Prostate gland (tissue), 2 donors: ENCODE measurements at regions of chr15 and their contacts with region 1.

Region 1: DNA sequence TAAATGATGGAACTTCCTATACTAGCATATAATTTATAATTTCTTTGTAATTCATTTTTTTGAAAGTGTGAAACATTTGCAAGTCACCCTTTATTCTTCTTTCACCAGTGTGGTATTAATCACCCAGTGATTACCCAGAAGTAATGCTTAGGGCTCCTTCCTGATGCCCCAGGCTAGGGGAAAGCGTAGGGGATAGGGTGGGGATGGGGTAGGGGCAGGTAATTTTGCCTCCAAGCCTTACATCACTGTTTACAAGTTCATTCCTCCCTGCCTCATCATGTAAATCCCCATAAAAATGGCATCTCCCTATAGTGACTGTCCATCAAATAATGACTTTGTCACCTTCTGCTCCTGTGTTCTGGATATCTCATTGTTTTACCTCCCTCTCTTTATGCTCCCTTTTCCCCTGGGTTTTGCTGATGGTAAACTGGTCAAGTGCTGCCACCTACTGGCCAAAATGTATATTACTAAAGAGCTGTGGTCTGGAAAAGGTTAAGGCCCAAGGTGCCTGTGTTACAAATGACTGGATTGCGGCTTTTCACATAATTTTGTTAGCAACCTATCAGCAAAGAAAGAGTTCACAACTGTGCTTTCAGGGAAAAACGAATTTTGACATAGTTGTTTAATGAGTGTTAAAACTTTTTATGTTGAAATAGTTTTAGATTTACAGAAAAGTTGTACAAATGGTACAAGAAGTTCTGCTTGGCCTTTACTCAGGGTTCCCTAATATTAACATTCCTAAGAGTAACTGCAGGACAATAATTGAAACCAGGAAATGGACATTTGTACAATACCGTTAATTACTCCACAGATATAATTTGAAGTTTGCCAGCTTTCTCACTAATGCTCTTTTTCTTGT is 54.7 kb downstream of the ONECUT1 start:
- DNase-seq: peak; percentile 76
- H3K4me3 ChIP-seq: no peak overlapping the region
- H3K27ac ChIP-seq: no peak overlapping the region
- H3K4me1 ChIP-seq: no peaks in the 10 kb centered on the region
- H3K27me3 ChIP-seq: no peaks in the 10 kb centered on the region
- CTCF ChIP-seq: peak; percentile 79 to 95 (median 82)
- POLR2A ChIP-seq: no peak

Region 2: GRCh38 chr15:52256366-52256765 is 479.1 kb before region 1 on chr15:
- intact Hi-C with region 1: loop called (anchors 5 kb)
- DNase-seq: peak; percentile 72
- H3K4me3 ChIP-seq: no peak overlapping the region
- H3K27ac ChIP-seq: no peak overlapping the region
- H3K4me1 ChIP-seq: peaks cover 5% of the 10 kb centered on the region
- H3K27me3 ChIP-seq: no peaks in the 10 kb centered on the region
- CTCF ChIP-seq: peak; percentile 78 to 90 (median 88)
- POLR2A ChIP-seq: no peak

Region 3: GRCh38 chr15:52326756-52327155 is 408.7 kb before region 1 on chr15:
- intact Hi-C with region 1: loop called (anchors 5 kb)
- DNase-seq: no peak
- H3K4me3 ChIP-seq: no peak overlapping the region
- H3K27ac ChIP-seq: no peak overlapping the region
- H3K4me1 ChIP-seq: no peaks in the 10 kb centered on the region
- H3K27me3 ChIP-seq: no peaks in the 10 kb centered on the region
- CTCF ChIP-seq: no peak
- POLR2A ChIP-seq: no peak

Region 4: DNA sequence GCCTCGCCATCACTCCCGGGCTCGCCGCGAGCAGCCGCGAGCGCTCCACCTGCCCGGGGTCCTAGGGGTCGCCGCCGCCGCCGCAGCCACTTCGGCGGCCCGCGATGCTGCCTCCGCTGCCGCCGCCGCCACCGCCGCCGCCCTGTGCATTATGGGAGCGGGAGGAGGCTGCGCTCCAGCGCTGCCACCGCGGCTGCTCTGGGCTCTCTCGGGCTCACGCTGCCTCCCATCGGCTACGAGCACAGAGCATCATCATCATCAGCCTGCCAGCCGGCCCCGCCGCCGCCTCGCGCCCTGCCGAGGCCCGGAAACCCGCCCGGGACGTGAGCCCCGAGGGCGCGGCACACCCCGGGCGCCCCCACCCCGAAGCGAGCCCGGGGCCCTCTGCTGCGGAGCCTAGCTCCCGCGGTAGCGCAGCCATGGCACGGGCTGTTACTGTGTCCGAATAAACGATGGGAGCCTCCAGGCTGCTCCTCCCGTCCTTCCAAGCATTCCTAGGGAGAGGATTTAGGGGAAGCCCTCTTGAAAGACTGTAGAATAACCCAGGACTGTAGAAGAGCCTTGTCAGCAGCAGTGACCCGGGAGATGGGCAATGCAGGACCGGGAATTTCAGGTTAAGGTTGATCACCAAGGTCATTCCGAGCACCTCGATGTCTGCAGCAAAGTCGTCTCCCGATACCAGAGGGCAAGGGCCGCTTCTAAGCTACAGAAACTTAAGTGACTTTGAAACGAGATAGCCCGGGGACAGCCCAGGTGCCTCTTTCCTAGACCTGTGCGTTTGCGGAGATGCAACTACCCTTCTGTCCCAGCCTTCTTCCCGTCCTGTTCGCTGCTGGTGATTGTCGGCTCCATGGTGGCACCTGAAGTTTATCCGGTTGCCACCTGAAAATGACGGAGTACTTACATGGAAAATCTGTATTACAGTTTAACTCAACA is 206.2 kb before region 1 on chr15:
- intact Hi-C with region 1: loop called (anchors 10 kb)
- DNase-seq: peak; percentile 63
- H3K4me3 ChIP-seq: peak overlapping the region; percentile 81 to 88
- H3K27ac ChIP-seq: peak overlapping the region; percentile 65 to 81
- H3K4me1 ChIP-seq: no peaks in the 10 kb centered on the region
- H3K27me3 ChIP-seq: no peaks in the 10 kb centered on the region
- CTCF ChIP-seq: peak in 2 of 4 experiments; percentile 5 to 8
- POLR2A ChIP-seq: peak; percentile 7

Region 5: GRCh38 chr15:52797625-52798501 is 62.4 kb after region 1 on chr15:
- intact Hi-C with region 1: no loop called
- DNase-seq: no peak
- H3K4me3 ChIP-seq: no peak overlapping the region
- H3K27ac ChIP-seq: no peak overlapping the region
- H3K4me1 ChIP-seq: no peaks in the 10 kb centered on the region
- H3K27me3 ChIP-seq: peaks cover 67% of the 10 kb centered on the region
- CTCF ChIP-seq: no peak
- POLR2A ChIP-seq: no peak